CD8-positive, alpha-beta T cell (primary cell): ENCODE measurements at regions of chr16 and their contacts with region 1.

Region 1: DNA sequence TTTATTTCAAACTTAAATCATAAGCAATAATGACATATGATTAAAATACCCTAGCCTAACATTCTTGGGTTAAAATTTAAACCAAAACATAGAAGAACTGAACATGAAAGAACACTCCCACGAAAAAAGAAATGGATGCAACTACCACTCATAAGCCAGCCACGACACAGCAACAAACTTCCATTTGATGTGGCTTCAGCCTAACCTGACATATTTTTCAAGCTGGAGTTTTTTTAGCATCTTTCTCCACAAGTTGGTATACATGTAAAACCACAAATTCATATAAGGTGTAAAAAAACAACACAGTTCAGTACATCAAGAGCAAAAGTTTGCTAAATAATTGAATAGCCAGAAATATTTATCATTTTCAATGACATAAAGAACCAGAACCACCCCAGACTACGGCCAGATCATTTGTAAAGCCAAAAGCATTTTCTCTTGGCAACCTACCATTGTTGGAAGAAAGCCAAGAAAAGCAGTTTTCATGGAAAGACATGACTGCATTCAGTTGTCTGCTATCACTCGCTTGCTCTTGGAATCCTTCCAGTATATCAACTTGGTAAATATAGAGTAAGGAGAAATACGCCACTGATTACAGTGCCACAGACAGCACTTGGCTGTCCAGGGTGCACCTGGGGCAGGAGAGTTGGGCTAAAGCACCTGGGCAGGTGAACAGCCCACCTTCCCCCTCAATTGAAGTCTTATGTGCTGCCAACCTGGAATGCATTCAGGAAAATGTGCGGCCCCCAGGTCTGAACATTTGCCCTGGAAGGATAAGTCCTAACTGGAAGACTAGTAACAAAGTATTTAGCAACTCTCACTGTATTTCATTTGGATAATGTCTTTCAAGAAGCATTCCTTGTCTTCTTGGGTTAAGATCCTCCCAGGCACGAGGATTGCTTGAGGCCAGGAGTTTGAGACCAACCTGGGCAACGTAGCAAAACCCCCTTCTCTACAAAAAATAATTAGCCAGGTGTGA is 60.5 kb downstream of the CREBBP start:
- DNase-seq: peak in 3 of 9 experiments; percentile 29 to 81 (median 64)
- ATAC-seq: peak; percentile 56
- H3K4me3 ChIP-seq: peak overlapping the region in 1 of 2 experiments; percentile 6
- H3K4me3 Mint-ChIP-seq: peak overlapping the region; percentile 73
- H3K27ac ChIP-seq: no peak overlapping the region
- H3K27ac Mint-ChIP-seq: peak overlapping the region; percentile 30
- H3K4me1 ChIP-seq: peaks cover 85% of the 10 kb centered on the region
- H3K4me1 Mint-ChIP-seq: peaks cover 93% of the 10 kb centered on the region
- H3K27me3 ChIP-seq: no peaks in the 10 kb centered on the region
- H3K27me3 Mint-ChIP-seq: no peaks in the 10 kb centered on the region
- CTCF ChIP-seq: no peak

Region 2: DNA sequence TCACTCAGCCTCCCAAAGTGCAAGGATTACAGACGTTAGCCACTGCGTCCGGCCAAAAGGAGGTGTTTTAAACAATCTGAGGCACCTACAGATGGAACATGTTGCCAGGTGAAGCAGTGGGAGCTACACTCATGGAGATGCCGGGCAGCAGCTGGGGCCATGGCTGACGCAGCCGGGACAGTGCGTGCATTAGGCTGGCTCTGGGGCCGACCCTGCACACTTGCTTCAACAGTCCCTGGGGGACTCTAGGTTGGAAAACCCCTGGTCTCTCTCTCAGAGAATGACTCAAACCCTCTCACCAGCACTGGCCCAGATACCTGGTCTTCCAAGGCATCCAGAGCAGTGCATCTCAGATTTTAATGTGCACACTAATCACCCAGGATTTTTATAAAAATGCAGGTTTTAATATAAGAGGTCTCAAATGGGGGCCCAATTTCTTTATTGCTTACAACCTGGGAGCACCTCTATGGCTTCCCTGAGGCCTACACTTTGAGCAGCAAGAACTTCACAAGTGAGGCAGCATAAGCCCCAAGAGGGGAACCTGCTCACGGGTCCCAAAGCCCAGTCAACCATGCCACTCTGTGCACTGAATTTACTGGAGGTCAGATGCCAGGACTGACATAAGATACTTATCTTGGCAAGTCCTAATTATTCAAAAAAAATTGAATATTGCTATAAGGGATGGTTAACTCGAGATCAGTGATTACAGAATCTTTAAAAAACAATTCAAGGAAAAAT is 31.9 kb before region 1 on chr16:
- CTCF ChIA-PET with region 1: no interaction called
- POLR2A ChIA-PET with region 1: no interaction called
- intact Hi-C with region 1: loop called in 1 of 2 experiments (anchors 2 kb)
- DNase-seq: no peak
- ATAC-seq: no peak
- H3K4me3 ChIP-seq: no peak overlapping the region
- H3K4me3 Mint-ChIP-seq: no peak overlapping the region
- H3K27ac ChIP-seq: no peak overlapping the region
- H3K27ac Mint-ChIP-seq: no peak overlapping the region
- H3K4me1 ChIP-seq: peaks cover 38% of the 10 kb centered on the region
- H3K4me1 Mint-ChIP-seq: peaks cover 60% of the 10 kb centered on the region
- H3K27me3 ChIP-seq: no peaks in the 10 kb centered on the region
- H3K27me3 Mint-ChIP-seq: no peaks in the 10 kb centered on the region
- CTCF ChIP-seq: no peak

Region 3: DNA sequence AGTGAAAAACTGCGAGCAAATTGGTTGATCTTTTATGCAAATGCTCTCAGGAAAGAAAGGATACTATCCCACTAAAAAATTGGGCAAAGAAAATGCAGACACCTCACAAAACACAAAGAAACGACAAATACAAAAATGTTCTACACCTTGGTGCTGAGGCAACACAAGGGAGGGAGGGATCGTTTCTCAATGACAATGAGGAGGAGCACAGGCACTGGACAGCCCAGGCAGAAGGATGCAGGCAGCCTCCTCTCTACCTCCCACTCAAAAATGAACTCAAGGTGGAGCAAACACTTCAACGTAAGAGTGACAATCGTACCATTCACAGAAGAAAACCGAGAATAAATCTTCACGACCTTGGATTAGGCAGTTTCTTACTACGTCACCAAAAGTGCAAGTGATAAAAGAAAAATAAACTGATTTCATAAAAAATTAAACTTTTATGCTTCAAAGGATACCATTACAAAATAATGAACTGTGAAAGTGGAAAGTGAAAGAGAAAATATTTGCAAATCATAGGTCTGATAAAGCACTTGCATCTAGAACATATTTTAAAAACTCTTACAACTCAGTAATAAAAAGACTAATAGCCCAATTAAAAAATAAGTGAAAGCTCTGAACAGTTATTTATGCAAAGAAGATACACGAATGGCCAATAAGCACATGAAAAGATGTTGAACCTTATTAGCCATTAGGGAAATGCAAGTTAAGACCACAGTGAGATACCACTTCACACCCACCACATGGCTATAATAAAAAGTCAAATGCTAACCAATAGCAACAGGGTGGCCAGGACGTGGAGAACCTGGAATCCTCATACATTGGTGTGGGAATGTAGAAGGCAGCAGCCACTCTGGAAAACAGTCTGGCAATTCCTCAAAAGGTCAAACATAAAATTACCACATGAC is 21.9 kb before region 1 on chr16:
- CTCF ChIA-PET with region 1: interaction called, 3 read pairs
- POLR2A ChIA-PET with region 1: interaction called, 4 read pairs
- intact Hi-C with region 1: loop called in 1 of 2 experiments (anchors 2 kb)
- DNase-seq: peak in 2 of 9 experiments; percentile 28 to 40
- ATAC-seq: no peak
- H3K4me3 ChIP-seq: no peak overlapping the region
- H3K4me3 Mint-ChIP-seq: peak overlapping the region; percentile 58
- H3K27ac ChIP-seq: no peak overlapping the region
- H3K27ac Mint-ChIP-seq: no peak overlapping the region
- H3K4me1 ChIP-seq: peaks cover 60% of the 10 kb centered on the region
- H3K4me1 Mint-ChIP-seq: peaks cover 78% of the 10 kb centered on the region
- H3K27me3 ChIP-seq: no peaks in the 10 kb centered on the region
- H3K27me3 Mint-ChIP-seq: no peaks in the 10 kb centered on the region
- CTCF ChIP-seq: no peak

Region 4: DNA sequence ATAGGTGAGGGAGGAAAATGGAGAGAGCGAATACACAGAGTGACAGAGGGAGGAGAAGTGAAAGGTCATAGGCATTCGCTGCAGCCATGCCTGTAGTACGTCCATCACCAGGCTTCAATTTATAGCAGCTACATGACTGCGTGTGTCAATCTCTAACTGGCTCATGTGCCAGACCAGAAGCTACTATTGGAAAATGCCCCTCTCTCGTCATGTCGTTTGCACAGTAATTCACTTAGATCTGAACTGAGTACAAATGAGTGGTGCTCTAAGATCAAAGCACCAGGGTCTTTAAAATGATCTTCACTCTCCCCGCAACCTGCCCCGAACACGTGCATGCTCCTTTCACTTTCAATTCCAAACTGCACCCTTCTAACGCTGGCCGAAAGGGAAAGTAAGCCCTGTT is 244.9 kb after region 1 on chr16:
- CTCF ChIA-PET with region 1: no interaction called
- POLR2A ChIA-PET with region 1: no interaction called
- intact Hi-C with region 1: no loop called
- DNase-seq: peak in 8 of 9 experiments; percentile 9 to 78 (median 37)
- ATAC-seq: peak; percentile 91
- H3K4me3 ChIP-seq: peak overlapping the region; percentile 56 to 57
- H3K4me3 Mint-ChIP-seq: peak overlapping the region; percentile 84
- H3K27ac ChIP-seq: peak overlapping the region; percentile 64 to 72
- H3K27ac Mint-ChIP-seq: peak overlapping the region; percentile 88
- H3K4me1 ChIP-seq: peaks cover 13% of the 10 kb centered on the region
- H3K4me1 Mint-ChIP-seq: peaks cover 14% of the 10 kb centered on the region
- H3K27me3 ChIP-seq: no peaks in the 10 kb centered on the region
- H3K27me3 Mint-ChIP-seq: no peaks in the 10 kb centered on the region
- CTCF ChIP-seq: no peak